ENCODE measurements at regions of chr2 and their contacts with region 1.

Region 1: DNA sequence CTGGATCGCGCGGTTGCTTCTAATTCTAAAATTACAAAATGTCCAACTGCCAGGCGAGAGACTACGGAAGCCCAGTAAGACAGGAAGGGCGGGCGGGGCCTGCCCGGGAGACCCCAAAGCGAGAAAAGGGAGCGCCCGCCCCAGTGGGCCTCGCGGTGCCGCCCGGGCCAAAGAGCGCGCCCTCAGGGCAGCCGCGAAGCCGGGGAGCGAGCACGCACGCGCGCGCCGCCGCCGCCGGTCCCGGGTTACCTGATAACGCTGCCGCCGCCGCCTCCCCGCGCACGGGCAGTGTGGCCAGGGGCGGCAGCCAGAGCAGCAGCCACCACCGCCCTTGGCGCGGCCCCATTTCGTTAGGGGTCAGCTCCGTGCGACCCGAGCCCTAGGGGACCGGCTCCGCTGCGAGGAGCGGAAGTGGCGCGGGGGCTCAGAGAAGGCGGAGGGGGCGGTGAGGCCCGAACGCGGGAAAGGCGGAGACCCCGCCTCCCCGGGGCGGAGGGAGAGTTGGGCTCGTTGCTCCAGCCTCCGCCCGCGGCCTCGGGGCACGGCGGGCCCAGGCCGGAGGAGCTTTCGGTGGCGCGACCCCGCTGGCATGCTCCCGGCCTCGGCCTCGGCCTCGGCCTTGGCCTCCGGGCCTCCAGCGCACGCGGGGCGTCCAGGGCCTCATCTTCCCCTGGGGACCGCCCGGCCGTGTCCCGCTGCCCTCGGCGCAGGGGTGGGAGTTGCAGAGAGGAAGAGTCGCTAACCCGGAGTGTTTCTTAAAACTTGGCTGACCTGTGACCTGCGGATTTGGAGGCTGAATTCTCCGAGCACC is at the start of gene NEMP2:
- DNase-seq: peak; percentile 94
- H3K4me3 ChIP-seq: peak within 1 kb of the TSS; percentile 75 to 84 (median 82)
- H3K27ac ChIP-seq: peak within 1 kb of the TSS; percentile 96 to 98 (median 98)
- H3K4me1 ChIP-seq: peaks cover 15 to 40% (median 28%) of the 10 kb centered on the region in 4 donors
- H3K27me3 ChIP-seq: no peaks in the 10 kb centered on the region
- CTCF ChIP-seq: no peak
- EP300 ChIP-seq: no peak
- POLR2A ChIP-seq: no peak
- total RNA-seq, gene NEMP2: 2.5 to 5.7 (median 4.3) TPM

Region 2: DNA sequence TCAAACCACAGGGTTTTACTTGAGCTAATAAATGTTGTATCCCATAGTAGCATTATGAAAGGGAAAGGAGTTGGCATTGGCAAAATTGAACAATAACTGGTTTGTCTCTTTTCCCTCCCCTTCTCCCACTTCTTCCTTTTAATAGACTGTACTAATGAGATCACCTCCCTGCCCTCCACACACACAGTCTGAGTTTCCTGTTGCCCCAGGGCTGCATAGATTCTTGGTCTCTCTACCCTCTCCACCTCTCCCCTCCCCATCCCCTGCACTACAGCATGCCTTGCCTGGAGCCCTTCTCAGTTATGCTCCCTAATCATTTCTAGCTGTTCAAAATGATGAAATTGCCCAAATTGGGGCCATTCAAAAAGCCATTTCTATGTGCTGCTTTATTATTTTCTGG is 37.2 kb after region 1 on chr2:
- intact Hi-C with region 1: loop called (anchors 5 kb)
- DNase-seq: peak; percentile 24
- H3K4me3 ChIP-seq: no peak overlapping the region
- H3K27ac ChIP-seq: no peak overlapping the region
- H3K4me1 ChIP-seq: peaks cover 0 to 20% (median 13%) of the 10 kb centered on the region in 4 donors
- H3K27me3 ChIP-seq: no peaks in the 10 kb centered on the region
- CTCF ChIP-seq: no peak
- EP300 ChIP-seq: no peak
- POLR2A ChIP-seq: no peak

Region 3: DNA sequence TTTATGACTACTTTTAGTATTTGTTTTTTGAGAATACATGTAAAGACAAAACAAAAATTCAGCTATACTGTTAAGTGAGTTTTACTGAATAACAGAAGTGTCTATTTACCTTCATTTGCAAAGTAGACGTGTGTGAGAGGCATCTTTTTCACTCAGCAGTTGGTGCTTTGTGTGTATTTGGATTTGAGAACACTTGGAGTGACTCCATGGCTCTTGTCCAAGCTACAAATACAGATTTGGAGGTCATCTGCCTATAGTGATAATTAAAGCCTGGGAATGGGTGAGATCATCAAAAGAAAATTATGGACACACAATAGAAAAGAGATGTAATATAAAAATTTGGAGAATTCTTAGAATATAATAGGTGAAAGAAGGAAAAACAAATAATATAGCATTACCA is 120.6 kb after region 1 on chr2:
- intact Hi-C with region 1: loop called (anchors 5 kb)
- DNase-seq: no peak
- H3K4me3 ChIP-seq: no peak overlapping the region
- H3K27ac ChIP-seq: peak overlapping the region in 3 of 4 donors; percentile 50 to 58 (median 50)
- H3K4me1 ChIP-seq: peaks cover 46 to 98% (median 95%) of the 10 kb centered on the region in 4 donors
- H3K27me3 ChIP-seq: no peaks in the 10 kb centered on the region
- CTCF ChIP-seq: no peak
- EP300 ChIP-seq: no peak
- POLR2A ChIP-seq: no peak